Ascending aorta (tissue), 2 donors: ENCODE measurements at regions of chr4 and their contacts with region 1.

Region 1: GRCh38 chr4:87078987-87079486 is 141.4 kb downstream of the KLHL8 start:
- DNase-seq: peak in 1 of 2 donors; percentile 84
- H3K4me3 ChIP-seq: peak overlapping the region in 1 of 2 donors; percentile 41
- H3K27ac ChIP-seq: peak overlapping the region; percentile 41 to 79
- H3K4me1 ChIP-seq: peaks cover 7 to 42% of the 10 kb centered on the region in 2 donors
- H3K27me3 ChIP-seq: no peaks in the 10 kb centered on the region
- CTCF ChIP-seq: no peak

Region 2: DNA sequence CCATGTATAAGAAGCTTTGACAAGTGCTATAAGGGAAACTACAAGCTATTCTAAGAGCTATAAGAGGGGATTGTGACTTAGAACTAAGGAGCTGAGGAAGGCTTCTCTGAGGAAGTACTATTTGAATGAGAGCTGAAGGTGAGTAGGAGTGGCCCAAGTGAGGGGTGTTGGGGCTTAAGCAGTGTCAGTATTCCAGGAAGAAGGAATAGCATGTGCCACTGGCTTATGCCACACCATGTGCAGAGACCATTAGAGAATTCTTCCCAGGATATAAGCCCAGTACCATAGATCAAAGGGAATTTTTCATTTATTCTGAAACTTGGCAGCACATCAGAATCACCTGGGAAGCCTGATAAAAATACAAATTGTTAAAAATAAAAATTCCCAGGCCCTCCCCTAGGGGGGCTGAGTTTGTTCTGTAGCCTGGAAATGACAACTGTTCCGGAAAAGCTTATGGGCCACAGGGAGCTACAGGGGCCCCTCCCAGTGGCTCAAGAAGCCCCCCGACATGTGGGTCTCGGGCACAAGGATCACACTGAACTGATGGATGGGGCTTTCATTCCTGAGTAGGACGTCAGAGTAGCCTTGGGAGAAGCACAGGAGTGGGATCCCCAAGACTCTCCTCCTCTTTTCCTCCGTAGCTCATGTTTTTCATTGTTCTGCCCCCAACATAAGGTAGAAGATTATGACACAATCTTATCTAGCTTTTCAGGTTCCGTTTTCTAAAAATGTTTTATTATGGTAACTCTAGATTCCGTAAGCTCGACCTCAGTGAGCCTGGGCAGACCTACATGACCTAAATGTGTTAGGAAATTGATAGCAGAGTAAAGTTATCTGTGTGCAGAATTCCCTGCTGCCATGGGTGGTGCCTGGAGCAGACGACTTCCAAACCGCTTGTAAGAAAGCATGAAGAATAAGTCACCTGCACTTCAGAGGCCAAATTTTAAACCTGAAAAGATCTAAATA is 25.0 kb before region 1 on chr4:
- intact Hi-C with region 1: loop called (anchors 2 kb)
- DNase-seq: no peak
- H3K4me3 ChIP-seq: peak overlapping the region; percentile 11 to 43
- H3K27ac ChIP-seq: peak overlapping the region; percentile 83 to 84
- H3K4me1 ChIP-seq: peaks cover 16 to 72% of the 10 kb centered on the region in 2 donors
- H3K27me3 ChIP-seq: no peaks in the 10 kb centered on the region
- CTCF ChIP-seq: no peak

Region 3: DNA sequence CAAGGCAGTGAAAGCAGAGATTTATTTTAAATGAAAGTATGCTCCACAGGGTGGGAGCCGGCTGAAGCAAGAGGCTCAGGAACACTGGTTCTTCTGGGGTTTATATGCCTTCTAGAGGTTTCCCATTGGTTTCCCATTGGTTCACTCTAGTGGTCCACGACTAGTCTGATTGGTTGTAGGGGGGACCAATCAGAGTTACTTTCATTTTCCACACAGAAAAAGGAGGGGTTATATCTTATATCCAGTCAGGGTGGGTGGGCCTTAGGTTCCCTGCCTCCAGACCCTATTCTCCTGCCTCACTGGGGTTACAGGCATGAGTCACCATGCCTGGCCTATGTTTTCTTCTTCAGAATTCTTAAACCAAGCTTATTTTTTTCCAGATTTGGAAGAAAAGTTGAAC is 39.8 kb after region 1 on chr4:
- intact Hi-C with region 1: loop called (anchors 5 kb)
- DNase-seq: no peak
- H3K4me3 ChIP-seq: no peak overlapping the region
- H3K27ac ChIP-seq: peak overlapping the region in 1 of 2 donors; percentile 73
- H3K4me1 ChIP-seq: peaks cover 4 to 43% of the 10 kb centered on the region in 2 donors
- H3K27me3 ChIP-seq: no peaks in the 10 kb centered on the region
- CTCF ChIP-seq: no peak

Region 4: DNA sequence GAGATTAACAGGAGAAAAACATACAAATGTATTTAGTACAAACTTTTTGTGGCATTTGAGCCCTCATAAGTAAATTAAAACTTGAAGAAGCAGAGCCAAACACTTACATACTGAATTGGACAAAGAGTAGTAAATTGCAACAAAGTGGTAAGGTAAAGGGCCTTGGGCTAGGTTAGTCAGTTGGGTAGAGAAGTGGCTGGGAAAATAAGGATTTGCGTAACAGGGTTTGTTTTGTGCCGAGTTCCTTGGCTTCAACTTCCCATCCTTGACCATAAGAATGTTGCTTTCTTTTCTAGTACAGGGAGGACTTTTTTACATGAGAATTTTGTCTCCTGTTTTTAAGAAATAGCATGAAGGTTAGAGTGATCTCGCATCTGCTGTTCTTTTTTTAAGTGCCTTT is 496.0 kb after region 1 on chr4:
- intact Hi-C with region 1: no loop called
- DNase-seq: no peak
- H3K4me3 ChIP-seq: no peak overlapping the region
- H3K27ac ChIP-seq: peak overlapping the region; percentile 40 to 62
- H3K4me1 ChIP-seq: peaks cover 0 to 4% of the 10 kb centered on the region in 2 donors
- H3K27me3 ChIP-seq: no peaks in the 10 kb centered on the region
- CTCF ChIP-seq: no peak